HepG2 (cell line): ENCODE measurements at regions of chr1 and their contacts with region 1.

Region 1: GRCh38 chr1:62070384-62071011 is 124.2 kb upstream of the L1TD1 start:
- DNase-seq: no peak
- ATAC-seq: no peak
- H3K4me3 ChIP-seq: no peak overlapping the region
- H3K27ac ChIP-seq: no peak overlapping the region
- H3K4me1 ChIP-seq: no peaks in the 10 kb centered on the region
- H3K27me3 ChIP-seq: no peaks in the 10 kb centered on the region
- CTCF ChIP-seq: peak; percentile 31; the same call in 1 of the 2 replicates
- EP300 ChIP-seq: no peak
- POLR2A ChIP-seq: no peak
- RAD21 ChIP-seq: 0 out of 2 replicates have a peak, but pooled peaks have one; percentile 10

Region 2: DNA sequence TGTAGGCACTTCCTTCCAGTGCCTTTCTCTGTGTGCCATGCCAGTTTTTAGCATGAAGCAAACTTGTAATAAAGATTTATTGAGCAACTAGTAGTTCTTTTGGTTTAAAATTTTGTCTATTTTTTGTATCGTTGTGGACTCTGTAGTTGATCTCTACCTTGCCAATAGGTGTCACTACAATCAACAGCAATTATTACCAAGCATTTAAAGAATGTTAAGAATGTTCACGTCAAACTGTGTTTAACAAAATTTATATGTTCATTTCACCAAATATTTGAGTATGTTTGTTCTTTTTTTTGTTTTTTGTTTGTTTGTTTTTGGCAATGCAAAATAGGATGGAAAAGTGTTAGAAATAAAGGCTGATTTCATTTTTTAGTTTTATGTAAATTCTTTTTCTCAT is 120.1 kb before region 1 on chr1:
- CTCF ChIA-PET with region 1: no interaction called
- POLR2A ChIA-PET with region 1: no interaction called
- in situ Hi-C with region 1: no loop called
- intact Hi-C with region 1: loop called (anchors 10 kb)
- DNase-seq: peak; percentile 28
- ATAC-seq: peak; percentile 60
- H3K4me3 ChIP-seq: no peak overlapping the region
- H3K27ac ChIP-seq: no peak overlapping the region
- H3K4me1 ChIP-seq: peaks cover 6% of the 10 kb centered on the region; the same call in 1 of the 2 replicates
- H3K27me3 ChIP-seq: no peaks in the 10 kb centered on the region
- CTCF ChIP-seq: peak; percentile 46
- EP300 ChIP-seq: no peak
- POLR2A ChIP-seq: no peak
- RAD21 ChIP-seq: peak; percentile 25; the same call in 1 of the 2 replicates

Region 3: DNA sequence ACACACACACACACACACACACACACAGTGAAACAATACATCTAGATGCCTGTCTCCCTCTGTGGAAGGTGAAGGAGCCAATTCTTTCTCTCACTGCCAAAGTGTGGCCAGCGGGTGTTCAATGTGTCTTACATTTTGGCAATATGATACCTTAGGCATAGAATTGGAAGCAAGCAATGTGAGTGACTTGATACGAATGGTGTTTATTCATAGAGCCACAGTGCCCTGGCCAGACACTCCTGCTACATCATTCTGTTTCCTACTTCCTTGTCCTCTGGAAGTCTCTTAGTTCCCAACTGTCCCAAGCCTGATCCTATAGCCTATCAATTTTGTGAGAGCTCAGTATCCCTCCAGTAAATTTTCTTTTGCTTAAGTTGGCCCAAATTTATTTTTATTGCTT is 45.8 kb before region 1 on chr1:
- CTCF ChIA-PET with region 1: no interaction called
- POLR2A ChIA-PET with region 1: no interaction called
- in situ Hi-C with region 1: no loop called
- intact Hi-C with region 1: no loop called
- DNase-seq: no peak
- ATAC-seq: no peak
- H3K4me3 ChIP-seq: no peak overlapping the region
- H3K27ac ChIP-seq: no peak overlapping the region
- H3K4me1 ChIP-seq: peaks cover 6% of the 10 kb centered on the region; the same call in 1 of the 2 replicates
- H3K27me3 ChIP-seq: no peaks in the 10 kb centered on the region
- CTCF ChIP-seq: no peak
- EP300 ChIP-seq: no peak
- POLR2A ChIP-seq: no peak
- RAD21 ChIP-seq: no peak